ENCODE measurements at regions of chr4 and their contacts with region 1.

Region 1: GRCh38 chr4:122700178-122700725 is 32.3 kb upstream of the BBS12 start:
- DNase-seq: no peak
- H3K4me3 Mint-ChIP-seq: peak overlapping the region; percentile 78
- H3K27ac Mint-ChIP-seq: peak overlapping the region; percentile 79
- H3K4me1 Mint-ChIP-seq: peaks cover 51% of the 10 kb centered on the region
- H3K27me3 Mint-ChIP-seq: peaks cover 11% of the 10 kb centered on the region

Region 2: DNA sequence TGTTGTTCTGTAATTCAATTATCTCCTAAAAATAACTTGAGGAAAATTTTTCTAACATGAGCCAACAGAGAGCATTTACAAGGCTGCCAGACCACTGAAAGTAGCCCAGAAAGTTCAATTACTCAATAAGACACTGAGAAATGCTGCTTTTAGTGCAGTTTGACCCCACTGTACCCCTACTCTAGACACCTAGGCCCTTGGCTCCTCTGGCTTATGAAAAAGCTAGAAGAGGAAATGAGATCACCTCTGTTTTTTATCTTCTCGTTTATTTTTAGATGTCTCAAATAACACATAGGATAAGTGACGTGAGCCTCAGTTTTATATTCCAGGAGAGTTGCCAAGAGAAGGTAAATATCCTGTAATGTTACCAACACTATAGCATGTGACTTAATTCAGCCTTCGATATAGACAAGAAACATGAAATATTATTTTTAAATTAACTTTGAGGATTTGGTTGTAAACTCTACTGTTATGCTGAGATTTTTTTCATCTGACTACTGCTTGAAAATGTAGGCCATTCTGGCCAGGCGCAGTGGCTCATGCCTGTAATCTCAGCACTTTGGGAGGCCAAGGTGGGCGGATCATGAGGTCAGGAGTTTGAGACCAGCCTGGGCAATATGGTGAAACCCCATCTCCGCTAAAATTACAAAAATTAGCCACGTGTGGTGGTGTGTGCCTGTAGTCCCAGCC is 1560.6 kb before region 1 on chr4:
- intact Hi-C with region 1: loop called (anchors 5 kb)
- DNase-seq: no peak
- H3K4me3 Mint-ChIP-seq: no peak overlapping the region
- H3K27ac Mint-ChIP-seq: peak overlapping the region; percentile 58
- H3K4me1 Mint-ChIP-seq: peaks cover 47% of the 10 kb centered on the region
- H3K27me3 Mint-ChIP-seq: no peaks in the 10 kb centered on the region

Region 3: DNA sequence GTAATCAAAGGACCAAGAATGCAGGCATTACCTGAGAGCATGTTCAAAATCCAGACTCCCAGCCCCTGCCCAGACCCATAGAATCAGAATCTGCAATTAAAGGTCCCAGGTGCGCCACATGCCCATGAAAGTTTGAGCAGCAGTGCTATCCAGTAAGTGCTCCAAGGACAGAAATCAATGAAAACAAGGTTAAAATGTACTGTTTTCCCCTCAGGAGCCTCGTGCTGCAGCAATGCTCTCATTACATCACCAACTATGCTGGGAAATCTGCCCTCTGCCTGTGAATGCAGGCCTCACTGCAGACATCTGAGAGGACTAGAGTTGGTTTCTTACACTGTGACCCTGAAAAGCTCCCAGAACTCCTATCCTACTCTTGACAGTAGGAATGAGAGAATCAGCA is 1024.5 kb before region 1 on chr4:
- intact Hi-C with region 1: no loop called
- DNase-seq: no peak
- H3K4me3 Mint-ChIP-seq: no peak overlapping the region
- H3K27ac Mint-ChIP-seq: no peak overlapping the region
- H3K4me1 Mint-ChIP-seq: no peaks in the 10 kb centered on the region
- H3K27me3 Mint-ChIP-seq: no peaks in the 10 kb centered on the region

Region 4: GRCh38 chr4:122666527-122667245 is 33.6 kb before region 1 on chr4:
- intact Hi-C with region 1: loop called (anchors 1 kb)
- DNase-seq: no peak
- H3K4me3 Mint-ChIP-seq: peak overlapping the region; percentile 60
- H3K27ac Mint-ChIP-seq: peak overlapping the region; percentile 78
- H3K4me1 Mint-ChIP-seq: peaks cover 70% of the 10 kb centered on the region
- H3K27me3 Mint-ChIP-seq: no peaks in the 10 kb centered on the region

Region 5: DNA sequence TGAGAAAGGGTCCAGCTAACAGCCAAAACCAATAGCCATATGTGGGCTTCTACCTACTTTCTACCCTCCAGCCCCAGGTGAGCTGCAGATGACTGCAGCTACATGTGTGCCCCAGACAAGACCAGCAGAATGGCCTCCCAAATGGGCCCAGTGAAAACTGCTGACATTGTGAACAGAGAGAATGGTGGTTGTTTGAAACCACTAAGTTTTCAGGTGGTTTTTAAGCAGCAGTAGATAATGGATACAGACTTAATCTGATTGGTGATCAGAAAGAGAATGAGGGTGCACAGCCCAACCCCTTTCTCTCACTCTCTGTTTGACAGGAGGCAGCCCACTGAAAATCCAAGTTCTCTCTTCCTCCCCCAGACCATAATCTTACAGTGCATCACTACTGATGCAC is 10.3 kb before region 1 on chr4:
- intact Hi-C with region 1: loop called (anchors 1 kb)
- DNase-seq: peak; percentile 34
- H3K4me3 Mint-ChIP-seq: no peak overlapping the region
- H3K27ac Mint-ChIP-seq: peak overlapping the region; percentile 70
- H3K4me1 Mint-ChIP-seq: peaks cover 72% of the 10 kb centered on the region
- H3K27me3 Mint-ChIP-seq: peaks cover 8% of the 10 kb centered on the region

Region 6: GRCh38 chr4:122744229-122744628 is 44.0 kb after region 1 on chr4:
- intact Hi-C with region 1: no loop called
- DNase-seq: no peak
- H3K4me3 Mint-ChIP-seq: no peak overlapping the region
- H3K27ac Mint-ChIP-seq: no peak overlapping the region
- H3K4me1 Mint-ChIP-seq: peaks cover 22% of the 10 kb centered on the region
- H3K27me3 Mint-ChIP-seq: no peaks in the 10 kb centered on the region

Region 7: GRCh38 chr4:122758033-122758432 is 57.8 kb after region 1 on chr4:
- intact Hi-C with region 1: no loop called
- DNase-seq: no peak
- H3K4me3 Mint-ChIP-seq: no peak overlapping the region
- H3K27ac Mint-ChIP-seq: no peak overlapping the region
- H3K4me1 Mint-ChIP-seq: peaks cover 15% of the 10 kb centered on the region
- H3K27me3 Mint-ChIP-seq: peaks cover 23% of the 10 kb centered on the region

Measured in activated T-helper 2 cell treated with anti-CD3 and anti-CD28 coated beads, Interferon-gamma antibody, Interleukin-2, Interleukin-4, amounts not matched to agents 10 μg/mL and 5 μg/mL and 100 μg/mL, durations not matched to agents 14 hours and 24 hours and 36 hours (primary cell).